HepG2 (cell line): ENCODE measurements at regions of chr2 and their contacts with region 1.

Region 1: DNA sequence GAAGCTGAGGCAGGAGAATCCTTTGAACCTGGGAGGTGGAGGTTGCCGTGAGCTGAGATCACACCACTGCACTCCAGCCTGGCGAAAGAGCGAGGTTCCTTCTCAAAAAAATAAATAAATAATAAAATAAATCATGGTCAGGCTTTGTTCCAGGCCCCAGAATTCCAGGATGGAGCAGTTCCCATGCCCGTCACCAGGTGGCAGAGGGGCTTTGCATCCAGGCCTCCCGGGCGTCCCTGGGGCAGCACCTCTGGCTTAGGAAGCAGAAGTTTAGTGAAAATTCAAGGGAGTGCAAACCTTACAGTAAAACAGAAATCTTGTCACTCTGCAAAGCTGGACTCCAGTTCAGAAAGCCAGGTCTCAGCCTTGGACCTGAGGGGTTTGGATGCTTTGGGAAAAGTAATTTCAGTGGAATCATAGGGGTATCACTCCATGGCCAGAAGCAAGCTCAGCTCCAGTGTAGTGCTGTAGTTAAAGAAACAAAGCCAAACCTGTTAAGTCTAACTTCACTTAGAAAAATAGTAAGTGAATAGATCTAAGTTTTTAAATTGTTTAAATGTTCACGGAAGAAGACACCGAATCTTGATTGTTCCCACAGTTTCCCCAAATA is 512.7 kb downstream of the CMPK2 start:
- DNase-seq: peak; percentile 33
- ATAC-seq: peak; percentile 97
- H3K4me3 ChIP-seq: no peak overlapping the region
- H3K27ac ChIP-seq: no peak overlapping the region
- H3K4me1 ChIP-seq: no peaks in the 10 kb centered on the region
- H3K27me3 ChIP-seq: no peaks in the 10 kb centered on the region
- CTCF ChIP-seq: peak; percentile 70
- EP300 ChIP-seq: no peak
- POLR2A ChIP-seq: no peak
- RAD21 ChIP-seq: peak; percentile 53

Region 2: GRCh38 chr2:6773007-6773693 is 420.1 kb after region 1 on chr2:
- CTCF ChIA-PET with region 1: interaction called, 17 read pairs
- POLR2A ChIA-PET with region 1: no interaction called
- in situ Hi-C with region 1: loop called (anchors 5 kb)
- intact Hi-C with region 1: no loop called
- DNase-seq: peak; percentile 21
- ATAC-seq: peak; percentile 95
- H3K4me3 ChIP-seq: no peak overlapping the region
- H3K27ac ChIP-seq: no peak overlapping the region
- H3K4me1 ChIP-seq: no peaks in the 10 kb centered on the region
- H3K27me3 ChIP-seq: peaks cover 0 to 46% of the 10 kb centered on the region in 2 experiments; a peak in 4 of 5 replicates
- CTCF ChIP-seq: peak; percentile 96
- EP300 ChIP-seq: no peak
- POLR2A ChIP-seq: no peak
- RAD21 ChIP-seq: peak; percentile 96